WTC11 (cell line): ENCODE measurements at regions of chr4 and their contacts with region 1.

Region 1: GRCh38 chr4:114417214-114417613 is 181.4 kb upstream of the UGT8 start:
- DNase-seq: no peak
- ATAC-seq: peak; percentile 82
- H3K4me3 Mint-ChIP-seq: no peak overlapping the region
- H3K27ac Mint-ChIP-seq: no peak overlapping the region
- H3K4me1 Mint-ChIP-seq: peaks cover 15% of the 10 kb centered on the region
- H3K27me3 Mint-ChIP-seq: no peaks in the 10 kb centered on the region; the same call in 1 of the 2 replicates
- CTCF ChIP-seq: no peak

Region 2: GRCh38 chr4:114312338-114312737 is 104.9 kb before region 1 on chr4:
- CTCF ChIA-PET with region 1: no interaction called
- POLR2A ChIA-PET with region 1: no interaction called
- DNase-seq: peak; percentile 38
- ATAC-seq: peak; percentile 65
- H3K4me3 Mint-ChIP-seq: no peak overlapping the region
- H3K27ac Mint-ChIP-seq: no peak overlapping the region
- H3K4me1 Mint-ChIP-seq: peaks cover 13% of the 10 kb centered on the region
- H3K27me3 Mint-ChIP-seq: peaks cover 37% of the 10 kb centered on the region
- CTCF ChIP-seq: no peak

Region 3: DNA sequence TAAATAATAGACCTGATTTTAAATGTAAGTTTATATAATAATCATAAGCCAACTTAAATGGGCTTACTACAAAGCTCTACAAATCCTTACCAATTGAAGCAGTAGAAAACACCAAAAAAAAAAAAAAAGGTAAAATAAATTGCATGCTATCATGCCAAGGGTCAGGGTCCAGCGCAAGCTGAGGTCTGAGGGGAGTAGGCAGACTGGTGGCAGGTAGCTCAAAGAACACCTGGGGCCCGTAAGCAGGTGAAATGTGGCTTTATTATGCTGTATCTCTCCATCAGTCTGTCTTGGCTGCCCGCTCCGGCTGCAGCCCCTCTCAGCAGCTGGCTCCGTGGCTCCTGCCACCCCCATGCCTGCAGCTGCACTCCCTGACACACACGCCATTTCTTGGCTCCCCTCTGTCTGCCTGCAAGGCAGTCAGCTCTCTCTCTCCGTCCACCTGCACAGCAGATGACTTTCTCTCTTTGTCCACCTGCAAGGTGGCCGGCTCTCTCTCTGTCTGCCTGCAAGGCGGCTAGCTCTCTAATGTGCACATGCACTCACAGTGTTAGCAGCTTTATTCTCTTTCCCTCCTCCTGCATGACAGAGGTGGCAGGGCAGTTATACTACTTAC is 28.0 kb before region 1 on chr4:
- CTCF ChIA-PET with region 1: interaction called, 15 read pairs
- POLR2A ChIA-PET with region 1: no interaction called
- DNase-seq: no peak
- ATAC-seq: peak; percentile 49
- H3K4me3 Mint-ChIP-seq: no peak overlapping the region
- H3K27ac Mint-ChIP-seq: peak overlapping the region; percentile 26; the same call in 1 of the 2 replicates
- H3K4me1 Mint-ChIP-seq: peaks cover 25% of the 10 kb centered on the region
- H3K27me3 Mint-ChIP-seq: no peaks in the 10 kb centered on the region
- CTCF ChIP-seq: no peak

Region 4: DNA sequence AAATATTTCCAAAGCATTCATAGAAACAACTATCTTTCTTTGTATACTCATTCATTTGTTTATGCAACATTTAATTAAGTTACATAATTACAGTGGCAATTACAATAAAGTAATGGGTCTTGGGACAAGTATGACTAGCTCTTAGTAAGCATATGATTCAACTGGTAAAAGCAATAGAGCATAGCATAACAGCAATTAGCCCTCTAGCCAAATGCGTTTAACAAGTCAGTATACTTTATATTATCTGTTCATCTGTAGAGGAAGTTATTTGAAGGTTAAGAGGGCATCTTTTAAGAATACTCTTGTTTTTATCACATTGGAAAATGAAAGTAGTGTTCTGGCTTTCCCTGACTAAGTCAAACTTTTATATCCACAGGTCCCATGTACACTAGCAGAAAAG is 16.7 kb before region 1 on chr4:
- CTCF ChIA-PET with region 1: no interaction called
- POLR2A ChIA-PET with region 1: no interaction called
- DNase-seq: no peak
- ATAC-seq: no peak
- H3K4me3 Mint-ChIP-seq: no peak overlapping the region
- H3K27ac Mint-ChIP-seq: no peak overlapping the region
- H3K4me1 Mint-ChIP-seq: peaks cover 24% of the 10 kb centered on the region
- H3K27me3 Mint-ChIP-seq: no peaks in the 10 kb centered on the region; the same call in 1 of the 2 replicates
- CTCF ChIP-seq: no peak

Region 5: GRCh38 chr4:114659386-114660008 is 242.3 kb after region 1 on chr4:
- CTCF ChIA-PET with region 1: interaction called, 21 read pairs
- POLR2A ChIA-PET with region 1: no interaction called
- DNase-seq: peak; percentile 66
- ATAC-seq: peak; percentile 94
- H3K4me3 Mint-ChIP-seq: no peak overlapping the region
- H3K27ac Mint-ChIP-seq: no peak overlapping the region; the same call in 1 of the 2 replicates
- H3K4me1 Mint-ChIP-seq: peaks cover 53% of the 10 kb centered on the region
- H3K27me3 Mint-ChIP-seq: no peaks in the 10 kb centered on the region
- CTCF ChIP-seq: peak; percentile 61

Region 6: DNA sequence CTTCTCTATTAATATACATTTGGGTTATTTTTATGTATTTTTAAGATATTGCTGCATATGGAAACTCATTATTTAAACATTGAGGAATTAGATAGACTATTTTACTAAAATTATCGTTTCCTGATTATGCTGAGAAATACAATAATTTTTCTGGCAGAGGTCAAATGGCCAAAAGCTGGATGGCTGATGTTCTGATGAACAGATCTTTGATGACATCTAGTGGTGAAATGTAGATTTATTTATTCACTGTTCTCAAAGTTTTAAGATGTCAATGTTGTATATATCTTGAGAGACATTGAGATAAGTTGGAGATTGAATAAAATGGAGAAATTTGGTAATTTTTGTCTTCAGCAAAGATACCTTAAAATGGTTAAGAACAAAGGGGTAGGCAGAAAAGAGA is 277.6 kb after region 1 on chr4:
- CTCF ChIA-PET with region 1: interaction called, 10 read pairs
- POLR2A ChIA-PET with region 1: no interaction called
- DNase-seq: no peak
- ATAC-seq: no peak
- H3K4me3 Mint-ChIP-seq: no peak overlapping the region
- H3K27ac Mint-ChIP-seq: no peak overlapping the region
- H3K4me1 Mint-ChIP-seq: no peaks in the 10 kb centered on the region
- H3K27me3 Mint-ChIP-seq: no peaks in the 10 kb centered on the region
- CTCF ChIP-seq: peak; percentile 48; the same call in 1 of the 2 replicates